Activated CD4-positive, alpha-beta memory T cell treated with anti-CD3 and anti-CD28 coated beads for 36 hours (primary cell): ENCODE measurements at regions of chr15 and their contacts with region 1.

Region 1: GRCh38 chr15:70259028-70259424 is 161.3 kb upstream of the TLE3 start:
- DNase-seq: no peak
- H3K4me3 Mint-ChIP-seq: peak overlapping the region; percentile 48
- H3K27ac Mint-ChIP-seq: peak overlapping the region; percentile 63
- H3K4me1 Mint-ChIP-seq: peaks cover 40% of the 10 kb centered on the region
- H3K27me3 Mint-ChIP-seq: peaks cover 1% of the 10 kb centered on the region

Region 2: DNA sequence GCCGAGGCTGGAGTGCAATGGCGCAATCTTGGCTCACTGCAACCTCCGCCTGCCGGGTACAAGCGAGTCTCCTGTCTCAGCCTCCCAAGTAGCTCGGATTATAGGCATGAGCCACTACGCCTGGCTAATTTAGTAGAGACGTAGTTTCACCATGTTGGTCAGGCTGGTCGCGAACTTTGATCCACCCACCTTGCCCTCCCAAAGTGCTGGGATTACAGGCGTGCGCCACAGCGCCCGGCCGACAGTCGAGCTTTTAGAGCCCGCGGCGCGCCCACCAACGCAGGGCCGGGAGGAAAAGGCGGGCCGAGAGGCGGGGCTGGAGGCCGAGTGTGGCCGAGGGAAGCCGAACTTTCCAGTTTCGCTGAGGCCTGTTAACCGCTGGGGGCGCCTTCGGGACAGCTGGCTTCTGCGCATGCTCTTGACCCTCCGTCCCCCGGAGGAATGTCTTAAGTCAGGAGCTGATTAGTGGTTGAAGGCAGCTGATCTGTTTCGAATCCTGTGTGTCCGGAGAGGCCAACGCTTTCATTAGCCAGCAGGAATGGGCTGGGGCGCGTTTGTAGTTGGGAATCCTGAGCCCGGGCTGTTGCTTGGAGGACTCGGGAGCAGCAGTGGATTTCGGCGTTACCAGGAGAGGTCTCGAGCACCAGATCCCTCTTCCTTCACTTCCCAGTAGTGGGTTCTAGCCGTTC is 796.4 kb before region 1 on chr15:
- CTCF ChIA-PET with region 1: interaction called, 4 read pairs
- POLR2A ChIA-PET with region 1: no interaction called
- intact Hi-C with region 1: loop called (anchors 10 kb)
- DNase-seq: peak; percentile 94
- H3K4me3 Mint-ChIP-seq: peak overlapping the region; percentile 85
- H3K27ac Mint-ChIP-seq: peak overlapping the region; percentile 81
- H3K4me1 Mint-ChIP-seq: peaks cover 30% of the 10 kb centered on the region
- H3K27me3 Mint-ChIP-seq: no peaks in the 10 kb centered on the region

Region 3: GRCh38 chr15:70299931-70300869 is 41.2 kb after region 1 on chr15:
- CTCF ChIA-PET with region 1: interaction called, 5 read pairs
- POLR2A ChIA-PET with region 1: interaction called, 6 read pairs
- intact Hi-C with region 1: loop called (anchors 2 kb)
- DNase-seq: peak; percentile 90
- H3K4me3 Mint-ChIP-seq: no peak overlapping the region
- H3K27ac Mint-ChIP-seq: no peak overlapping the region
- H3K4me1 Mint-ChIP-seq: peaks cover 15% of the 10 kb centered on the region
- H3K27me3 Mint-ChIP-seq: no peaks in the 10 kb centered on the region